PC-9 (cell line): ENCODE measurements at regions of chr3 and their contacts with region 1.

Region 1: GRCh38 chr3:44198284-44199269 is 43.1 kb upstream of the TOPAZ1 start:
- DNase-seq: peak; percentile 59 to 78
- H3K4me3 ChIP-seq: no peak overlapping the region
- H3K27ac ChIP-seq: no peak overlapping the region
- H3K4me1 ChIP-seq: no peaks in the 10 kb centered on the region
- H3K27me3 ChIP-seq: no peaks in the 10 kb centered on the region
- CTCF ChIP-seq: peak; percentile 79

Region 2: DNA sequence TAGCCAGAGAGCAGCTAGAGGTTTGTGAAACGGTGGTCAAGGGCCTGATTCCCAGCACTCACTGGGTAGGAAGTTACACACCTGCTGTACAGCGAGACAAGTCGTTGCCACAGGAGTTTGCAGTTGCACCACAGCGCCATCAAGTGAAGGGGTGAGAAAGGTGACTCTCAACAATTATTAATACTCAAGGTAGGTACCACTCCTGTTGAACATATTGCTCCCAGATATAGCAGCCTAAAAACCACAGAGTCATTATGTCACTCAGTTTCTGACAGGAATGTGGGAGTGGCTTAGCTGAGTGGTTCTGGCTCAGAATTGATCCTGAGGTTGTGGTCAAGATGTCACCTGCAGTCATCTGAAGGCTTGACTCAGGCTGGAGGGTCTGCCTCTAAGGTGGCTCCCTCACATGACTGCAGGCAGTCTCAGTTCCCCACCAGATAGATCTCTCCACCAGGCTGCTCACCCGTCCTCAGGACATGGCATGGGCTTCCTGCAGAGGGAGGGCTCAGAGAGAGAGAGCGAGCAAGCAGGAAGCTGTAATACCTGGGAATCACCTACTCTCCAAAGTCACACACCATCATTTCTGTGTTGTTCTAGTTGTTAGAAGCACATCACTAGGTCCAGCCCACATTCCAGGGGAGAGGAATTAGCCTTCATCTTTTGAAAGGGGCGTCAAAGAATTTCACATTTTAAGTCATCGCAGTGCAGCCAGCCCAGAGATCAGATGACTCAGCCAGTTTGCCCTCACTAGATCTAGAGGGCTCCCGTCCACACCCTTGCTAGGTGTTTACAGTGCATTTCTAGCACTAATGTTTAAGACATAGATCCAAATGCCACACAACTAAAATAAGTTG is 559.8 kb before region 1 on chr3:
- CTCF ChIA-PET with region 1: no interaction called
- POLR2A ChIA-PET with region 1: no interaction called
- intact Hi-C with region 1: loop called (anchors 1 kb)
- DNase-seq: peak; percentile 70 to 85
- H3K4me3 ChIP-seq: peak overlapping the region; percentile 18; the same call in 1 of the 2 replicates
- H3K27ac ChIP-seq: peak overlapping the region; percentile 78
- H3K4me1 ChIP-seq: peaks cover 23% of the 10 kb centered on the region
- H3K27me3 ChIP-seq: no peaks in the 10 kb centered on the region
- CTCF ChIP-seq: peak; percentile 59

Region 3: DNA sequence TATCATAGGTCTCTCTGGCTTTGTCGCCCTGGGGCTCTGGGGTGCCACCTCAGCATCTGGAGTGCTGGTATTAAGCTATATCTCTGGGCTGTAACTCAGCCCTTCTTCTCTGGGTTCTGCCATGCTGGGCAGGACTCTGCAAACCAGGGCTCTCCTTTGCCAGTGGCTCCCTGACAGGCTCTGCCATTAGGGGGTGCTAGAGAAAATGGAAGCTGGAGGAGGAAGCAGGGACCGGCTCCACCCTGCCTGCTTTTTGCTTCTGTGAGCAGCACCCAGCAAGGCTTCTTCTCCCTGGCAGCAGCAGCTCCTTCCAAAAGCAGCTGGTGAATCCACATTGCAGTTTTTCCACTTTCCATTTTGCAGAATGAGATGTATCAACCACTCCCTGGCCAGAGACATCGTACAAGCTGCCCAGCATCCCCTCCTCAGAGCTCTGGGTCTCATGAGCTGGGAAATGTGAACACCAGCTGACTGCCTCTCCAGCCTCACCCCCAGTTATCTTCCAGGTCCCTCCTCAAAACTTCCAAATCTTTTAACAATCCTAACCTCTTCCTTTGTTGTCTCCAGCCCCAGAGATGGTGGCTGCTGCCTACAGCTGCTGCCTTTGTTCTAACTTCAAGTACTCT is 342.8 kb before region 1 on chr3:
- CTCF ChIA-PET with region 1: no interaction called
- POLR2A ChIA-PET with region 1: no interaction called
- intact Hi-C with region 1: loop called (anchors 5 kb)
- DNase-seq: peak; percentile 64 to 69
- H3K4me3 ChIP-seq: no peak overlapping the region
- H3K27ac ChIP-seq: no peak overlapping the region
- H3K4me1 ChIP-seq: peaks cover 28% of the 10 kb centered on the region
- H3K27me3 ChIP-seq: no peaks in the 10 kb centered on the region
- CTCF ChIP-seq: peak; percentile 69

Region 4: GRCh38 chr3:44077246-44077645 is 121.3 kb before region 1 on chr3:
- CTCF ChIA-PET with region 1: no interaction called
- POLR2A ChIA-PET with region 1: no interaction called
- intact Hi-C with region 1: no loop called
- DNase-seq: no peak
- H3K4me3 ChIP-seq: no peak overlapping the region
- H3K27ac ChIP-seq: no peak overlapping the region
- H3K4me1 ChIP-seq: peaks cover 10% of the 10 kb centered on the region
- H3K27me3 ChIP-seq: no peaks in the 10 kb centered on the region
- CTCF ChIP-seq: no peak

Region 5: DNA sequence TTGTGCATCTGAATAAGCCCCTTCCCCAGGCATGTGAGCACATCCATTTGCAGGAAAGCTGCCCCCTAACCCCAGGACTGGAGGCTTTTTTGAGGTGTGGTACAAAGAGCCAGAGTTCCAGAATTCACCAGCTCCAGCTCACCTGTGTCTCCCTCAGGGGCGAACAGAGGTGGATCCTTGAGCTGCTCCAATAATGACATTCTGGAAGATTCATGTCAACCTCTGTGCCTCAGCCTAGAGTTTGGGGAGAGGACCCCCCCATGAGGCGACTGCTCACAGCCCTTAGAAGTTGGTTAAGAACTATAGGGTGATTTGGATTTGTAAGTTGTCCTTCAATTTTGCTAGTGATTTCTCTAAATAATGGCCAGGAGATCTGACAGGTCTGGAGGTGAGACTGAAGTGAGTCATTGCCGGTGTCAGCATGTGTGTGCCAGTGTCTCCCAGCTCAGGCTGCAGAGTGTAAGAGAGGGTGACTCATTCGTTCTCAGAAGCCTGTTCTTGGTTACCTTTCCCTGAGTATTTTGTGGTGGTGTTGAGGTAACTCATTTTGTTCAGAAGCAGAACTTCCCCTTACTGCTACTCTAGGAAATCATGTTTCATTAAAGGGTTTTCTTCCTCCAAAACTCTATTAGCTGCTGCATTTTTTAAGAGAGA is 93.8 kb before region 1 on chr3:
- CTCF ChIA-PET with region 1: no interaction called
- POLR2A ChIA-PET with region 1: no interaction called
- intact Hi-C with region 1: no loop called
- DNase-seq: peak; percentile 65 to 89
- H3K4me3 ChIP-seq: no peak overlapping the region
- H3K27ac ChIP-seq: peak overlapping the region; percentile 57
- H3K4me1 ChIP-seq: peaks cover 20% of the 10 kb centered on the region
- H3K27me3 ChIP-seq: no peaks in the 10 kb centered on the region
- CTCF ChIP-seq: no peak

Region 6: GRCh38 chr3:44906997-44907396 is 708.4 kb after region 1 on chr3:
- CTCF ChIA-PET with region 1: no interaction called
- POLR2A ChIA-PET with region 1: no interaction called
- intact Hi-C with region 1: no loop called
- DNase-seq: no peak
- H3K4me3 ChIP-seq: no peak overlapping the region
- H3K27ac ChIP-seq: no peak overlapping the region
- H3K4me1 ChIP-seq: no peaks in the 10 kb centered on the region
- H3K27me3 ChIP-seq: no peaks in the 10 kb centered on the region
- CTCF ChIP-seq: no peak